Ovary (tissue), 10 donors: ENCODE measurements at regions of chr16 and their contacts with region 1.

Region 1: DNA sequence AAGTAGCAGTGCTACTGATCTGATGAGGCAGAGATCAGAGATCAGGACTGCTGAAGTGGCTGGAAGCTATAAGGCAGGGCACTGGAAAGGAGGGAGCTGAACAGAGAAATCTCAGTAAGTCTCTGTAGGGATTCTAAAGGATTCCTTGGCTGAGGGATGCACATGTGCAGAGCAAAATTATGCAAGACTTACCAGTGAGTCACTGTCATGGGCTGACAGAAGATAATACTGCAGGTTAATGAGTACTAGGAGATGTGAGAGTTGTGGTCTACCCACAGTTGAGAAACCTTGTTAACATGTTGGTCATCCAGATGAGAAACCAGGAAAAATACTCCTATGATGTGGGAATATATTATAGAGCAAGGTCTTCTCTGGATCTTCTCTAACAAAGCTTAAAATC is 378.1 kb downstream of the HAPSTR1 start:
- DNase-seq: no peak
- H3K4me3 ChIP-seq: no peak overlapping the region
- H3K27ac ChIP-seq: no peak overlapping the region
- H3K4me1 ChIP-seq: no peaks in the 10 kb centered on the region
- H3K27me3 ChIP-seq: no peaks in the 10 kb centered on the region
- CTCF ChIP-seq: no peak
- EP300 ChIP-seq: no peak
- POLR2A ChIP-seq: no peak

Region 2: DNA sequence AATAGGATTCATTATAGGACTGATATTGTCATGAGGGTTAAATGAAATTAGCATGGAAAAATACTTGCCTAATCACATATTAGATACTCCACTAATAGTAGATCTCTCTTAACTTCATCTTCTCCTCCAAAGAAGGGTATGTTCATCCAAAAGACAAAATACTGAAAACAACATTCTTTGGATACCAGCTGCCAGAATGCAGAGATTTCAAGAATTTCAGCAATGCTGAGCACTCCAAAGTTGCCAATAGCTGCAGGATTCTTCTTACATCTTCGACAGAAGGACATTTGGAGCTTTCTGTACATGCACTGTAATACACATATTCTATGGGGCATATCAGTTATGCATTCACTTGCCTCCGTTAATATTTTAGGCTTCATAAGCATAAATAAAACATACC is 58.5 kb after region 1 on chr16:
- intact Hi-C with region 1: loop called in 1 of 4 experiments (anchors 2 kb)
- DNase-seq: no peak
- H3K4me3 ChIP-seq: no peak overlapping the region
- H3K27ac ChIP-seq: no peak overlapping the region
- H3K4me1 ChIP-seq: no peaks in the 10 kb centered on the region
- H3K27me3 ChIP-seq: no peaks in the 10 kb centered on the region
- CTCF ChIP-seq: no peak
- EP300 ChIP-seq: no peak
- POLR2A ChIP-seq: no peak

Region 3: GRCh38 chr16:9723136-9723535 is 253.6 kb after region 1 on chr16:
- intact Hi-C with region 1: no loop called
- DNase-seq: no peak
- H3K4me3 ChIP-seq: no peak overlapping the region
- H3K27ac ChIP-seq: no peak overlapping the region
- H3K4me1 ChIP-seq: no peaks in the 10 kb centered on the region
- H3K27me3 ChIP-seq: no peaks in the 10 kb centered on the region
- CTCF ChIP-seq: no peak
- EP300 ChIP-seq: no peak
- POLR2A ChIP-seq: no peak